HEK293 (cell line): ENCODE measurements at regions of chr10 and their contacts with region 1.

Region 1: DNA sequence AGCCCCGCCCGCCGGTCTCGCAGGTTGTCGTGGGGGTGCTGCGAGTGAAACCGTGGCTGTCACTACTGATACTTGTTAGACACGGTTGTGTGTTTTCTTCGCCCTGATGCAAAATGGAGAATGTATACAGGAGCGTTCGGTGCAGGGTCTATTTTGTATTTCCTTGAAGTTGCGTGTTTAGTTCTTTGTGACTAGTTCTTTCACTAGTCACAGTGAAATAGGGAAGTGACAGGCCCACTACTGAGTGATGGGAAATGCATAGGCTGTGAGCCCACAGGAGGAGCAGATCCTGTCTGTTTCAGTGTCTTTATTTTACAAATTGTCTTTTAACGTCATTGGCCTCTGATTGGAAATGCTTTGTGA is 675 bp downstream of the ABRAXAS2 start:
- H3K4me3 ChIP-seq: peak overlapping the region; percentile 91
- H3K27ac ChIP-seq: peak overlapping the region; percentile 66
- H3K4me1 ChIP-seq: peaks cover 6% of the 10 kb centered on the region; the same call in 1 of the 2 replicates
- CTCF ChIP-seq: no peak

Region 2: GRCh38 chr10:124768781-124769180 is 33.5 kb before region 1 on chr10:
- CTCF ChIA-PET with region 1: no interaction called
- POLR2A ChIA-PET with region 1: interaction called, 12 read pairs
- H3K4me3 ChIP-seq: no peak overlapping the region
- H3K27ac ChIP-seq: no peak overlapping the region
- H3K4me1 ChIP-seq: no peaks in the 10 kb centered on the region
- CTCF ChIP-seq: no peak

Region 3: DNA sequence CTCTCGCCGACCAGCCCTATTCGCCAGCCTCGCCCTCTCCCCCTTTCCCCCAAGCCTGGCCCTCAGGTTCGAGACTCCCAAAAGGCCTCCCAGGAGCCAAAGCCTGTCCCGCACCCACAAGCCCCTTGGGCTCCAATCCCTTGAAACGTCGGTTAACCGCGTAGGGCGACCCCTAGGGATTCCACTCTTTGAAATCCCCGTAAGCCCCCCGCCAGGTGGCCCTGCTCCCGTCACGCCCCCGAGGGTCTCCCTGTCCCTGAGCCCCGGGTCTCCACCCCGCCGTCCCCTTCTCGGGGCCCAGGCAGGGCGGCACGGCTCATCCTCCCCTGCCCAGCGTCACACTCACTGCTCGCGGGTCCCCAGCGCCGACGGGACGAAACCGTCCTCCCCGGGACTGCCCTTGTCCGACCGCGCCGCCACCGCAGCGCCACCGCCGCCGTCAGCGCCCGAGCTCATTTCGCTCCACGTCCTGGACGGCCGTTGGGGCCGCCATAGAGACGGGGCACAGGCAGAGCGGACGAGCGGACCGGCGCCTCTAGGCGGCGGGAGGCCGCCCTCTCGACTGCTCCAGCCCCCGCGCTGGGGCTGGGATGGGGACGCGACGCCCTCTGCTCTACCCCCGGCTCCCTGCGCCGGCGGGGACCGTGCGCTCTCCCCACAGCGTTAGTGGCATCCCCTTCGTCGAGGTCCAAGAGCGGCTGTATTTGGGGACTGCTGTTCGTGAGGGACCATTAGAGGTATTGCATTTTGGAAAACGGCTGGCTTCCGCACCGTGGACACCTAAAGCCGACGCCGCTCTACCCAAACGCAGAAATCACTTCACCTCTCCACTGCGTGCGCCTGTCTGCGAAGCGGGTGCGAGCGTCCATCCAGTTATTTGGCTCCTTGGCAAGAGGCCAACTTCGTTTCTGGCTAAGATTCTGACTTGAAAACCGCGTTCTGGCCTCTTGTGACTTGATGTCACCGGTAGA is 10.6 kb before region 1 on chr10 and contains the start of gene EEF1AKMT2:
- CTCF ChIA-PET with region 1: interaction called, 3 read pairs
- POLR2A ChIA-PET with region 1: interaction called, 32 read pairs
- H3K4me3 ChIP-seq: peak within 1 kb of the TSS; percentile 90
- H3K27ac ChIP-seq: peak within 1 kb of the TSS; percentile 89
- H3K4me1 ChIP-seq: no peaks in the 10 kb centered on the region
- CTCF ChIP-seq: peak; percentile 99